Testis (tissue), 5 donors: ENCODE measurements at regions of chr17 and their contacts with region 1.

Region 1: GRCh38 chr17:7989781-7990655 is 12.4 kb upstream of the GUCY2D start:
- DNase-seq: peak; percentile 92
- H3K4me3 ChIP-seq: peak overlapping the region; percentile 51 to 63
- H3K27ac ChIP-seq: peak overlapping the region in 1 of 2 donors; percentile 30
- H3K4me1 ChIP-seq: no peaks in the 10 kb centered on the region
- H3K27me3 ChIP-seq: no peaks in the 10 kb centered on the region
- CTCF ChIP-seq: peak; percentile 89 to 95 (median 92)
- POLR2A ChIP-seq: no peak

Region 2: DNA sequence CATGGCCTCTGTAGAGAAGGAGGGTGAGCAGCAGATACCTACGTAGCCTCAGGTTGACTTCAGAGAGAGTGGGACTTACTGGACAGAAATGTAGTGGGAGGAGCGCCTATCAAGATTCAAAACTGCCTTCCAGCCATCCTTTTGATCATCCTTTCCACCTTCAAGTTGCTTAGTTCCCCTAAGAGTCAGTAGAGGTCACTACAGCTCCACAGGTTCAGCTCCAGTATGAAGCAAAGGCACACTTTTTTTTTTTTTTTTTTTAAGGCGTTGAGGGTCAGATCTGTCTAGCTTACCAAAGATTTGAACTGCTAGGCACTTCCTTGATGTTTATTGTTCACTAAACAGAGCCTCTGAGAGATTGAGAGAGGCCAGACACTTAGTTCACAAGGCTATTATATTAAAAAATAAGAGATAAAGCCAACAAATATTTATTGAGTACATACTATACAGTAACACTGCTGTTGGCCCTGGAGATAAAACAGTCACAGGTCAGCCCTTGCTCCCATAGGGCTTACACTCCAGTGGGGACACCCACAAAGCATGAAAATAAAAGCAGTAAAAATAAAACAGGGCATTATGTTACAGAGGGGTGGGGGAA is 77.0 kb before region 1 on chr17:
- intact Hi-C with region 1: loop called (anchors 5 kb)
- DNase-seq: peak; percentile 47
- H3K4me3 ChIP-seq: no peak overlapping the region
- H3K27ac ChIP-seq: peak overlapping the region in 1 of 2 donors; percentile 56
- H3K4me1 ChIP-seq: peaks cover 11% of the 10 kb centered on the region
- H3K27me3 ChIP-seq: no peaks in the 10 kb centered on the region
- CTCF ChIP-seq: peak in 2 of 3 experiments; percentile 42
- POLR2A ChIP-seq: no peak

Region 3: DNA sequence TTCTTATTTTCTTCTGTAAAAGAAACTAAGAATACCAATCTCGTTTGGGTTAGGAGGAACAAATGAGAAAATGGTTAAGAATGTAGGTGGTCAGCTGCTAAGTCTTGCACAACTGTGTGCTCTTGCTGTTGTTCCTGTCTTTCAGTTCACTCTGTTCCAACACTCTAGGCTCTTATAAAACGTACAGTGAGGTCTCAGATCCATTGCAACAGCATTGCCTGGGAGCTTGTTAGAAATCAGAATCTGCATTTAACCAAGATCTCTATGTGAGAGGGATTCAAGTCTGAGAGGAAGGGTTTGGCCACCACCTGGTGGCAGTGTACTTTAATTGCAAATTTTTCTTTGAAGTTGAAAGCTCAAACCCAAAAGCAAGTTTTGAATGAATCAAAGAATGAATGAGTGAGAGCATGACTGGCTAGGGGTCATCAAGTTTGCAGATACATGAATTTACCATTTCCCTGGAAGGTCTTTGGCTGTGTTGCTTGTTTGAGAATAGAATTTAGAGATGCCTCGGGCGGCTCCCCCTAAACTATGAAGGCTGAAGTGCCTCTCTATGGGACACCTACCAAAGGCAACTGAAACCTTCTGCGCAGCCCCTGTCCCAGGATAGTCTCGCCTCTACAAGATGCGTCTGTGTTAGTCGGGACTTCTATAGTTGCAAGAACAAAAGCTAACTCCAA is 51.4 kb after region 1 on chr17:
- intact Hi-C with region 1: loop called (anchors 10 kb)
- DNase-seq: peak; percentile 37
- H3K4me3 ChIP-seq: no peak overlapping the region
- H3K27ac ChIP-seq: no peak overlapping the region
- H3K4me1 ChIP-seq: no peaks in the 10 kb centered on the region
- H3K27me3 ChIP-seq: no peaks in the 10 kb centered on the region
- CTCF ChIP-seq: peak in 1 of 3 experiments; percentile 57
- POLR2A ChIP-seq: no peak